Pancreas (tissue), 10 donors: ENCODE measurements at regions of chr7 and their contacts with region 1.

Region 1: GRCh38 chr7:7595451-7595850 is 28.8 kb downstream of the MIOS start:
- DNase-seq: no peak
- ATAC-seq: peak in 3 of 4 donors; percentile 62 to 70 (median 63)
- H3K4me3 ChIP-seq: no peak overlapping the region
- H3K27ac ChIP-seq: no peak overlapping the region
- H3K4me1 ChIP-seq: no peaks in the 10 kb centered on the region
- H3K27me3 ChIP-seq: no peaks in the 10 kb centered on the region
- CTCF ChIP-seq: peak in 2 of 4 donors; percentile 9 to 12

Region 2: GRCh38 chr7:7428806-7429205 is 166.6 kb before region 1 on chr7:
- intact Hi-C with region 1: no loop called
- DNase-seq: no peak
- ATAC-seq: no peak
- H3K4me3 ChIP-seq: no peak overlapping the region
- H3K27ac ChIP-seq: no peak overlapping the region
- H3K4me1 ChIP-seq: no peaks in the 10 kb centered on the region
- H3K27me3 ChIP-seq: no peaks in the 10 kb centered on the region
- CTCF ChIP-seq: no peak

Region 3: DNA sequence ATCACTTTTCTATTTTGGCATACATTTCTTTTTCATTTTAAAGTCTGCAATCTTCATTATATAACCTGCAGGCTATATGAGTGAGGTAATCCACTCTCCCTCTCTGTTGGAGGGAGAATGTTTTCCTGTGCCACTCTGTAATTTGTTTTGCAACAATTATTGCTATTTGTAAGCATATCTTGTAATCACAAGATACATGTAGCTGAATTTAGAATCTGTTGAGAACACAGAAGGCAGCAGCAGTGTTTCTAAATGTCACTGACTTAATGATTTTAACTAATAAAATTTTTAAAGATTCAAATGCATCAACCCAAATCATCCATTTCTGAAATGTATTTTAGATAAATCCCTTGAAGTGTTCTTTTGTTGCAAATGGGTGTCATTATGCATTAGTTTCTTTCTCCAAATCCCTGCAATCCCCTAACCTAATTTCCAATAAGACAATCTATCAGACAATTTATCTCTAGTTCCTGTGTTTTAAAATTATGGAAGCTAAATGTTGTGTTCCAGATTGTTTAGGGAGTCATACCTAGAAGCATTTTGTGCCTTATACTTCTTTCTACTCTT is 25.3 kb after region 1 on chr7:
- intact Hi-C with region 1: no loop called
- DNase-seq: no peak
- ATAC-seq: no peak
- H3K4me3 ChIP-seq: no peak overlapping the region
- H3K27ac ChIP-seq: no peak overlapping the region
- H3K4me1 ChIP-seq: no peaks in the 10 kb centered on the region
- H3K27me3 ChIP-seq: no peaks in the 10 kb centered on the region
- CTCF ChIP-seq: no peak

Region 4: DNA sequence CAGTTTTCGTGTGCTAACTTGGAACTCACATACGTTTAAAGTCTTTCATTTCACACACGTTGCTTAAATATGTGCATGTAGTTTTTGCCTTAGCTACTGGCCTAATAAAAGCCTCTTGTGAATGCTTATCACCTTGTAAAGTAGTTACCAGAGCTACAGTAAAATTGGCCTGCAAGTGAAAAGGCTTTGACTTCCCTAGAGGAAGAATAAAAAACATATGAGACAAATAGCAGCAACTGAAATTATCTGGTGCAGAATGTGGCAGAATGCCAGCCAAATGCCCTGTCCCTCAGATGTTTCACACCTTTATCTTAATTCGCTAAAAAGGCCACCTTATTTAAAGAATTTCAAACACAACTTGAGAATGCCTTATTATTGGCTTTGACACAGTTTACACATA is 151.0 kb after region 1 on chr7:
- intact Hi-C with region 1: no loop called
- DNase-seq: no peak
- ATAC-seq: no peak
- H3K4me3 ChIP-seq: no peak overlapping the region
- H3K27ac ChIP-seq: no peak overlapping the region
- H3K4me1 ChIP-seq: peaks cover 7% of the 10 kb centered on the region in 3 donors
- H3K27me3 ChIP-seq: no peaks in the 10 kb centered on the region
- CTCF ChIP-seq: no peak

Region 5: DNA sequence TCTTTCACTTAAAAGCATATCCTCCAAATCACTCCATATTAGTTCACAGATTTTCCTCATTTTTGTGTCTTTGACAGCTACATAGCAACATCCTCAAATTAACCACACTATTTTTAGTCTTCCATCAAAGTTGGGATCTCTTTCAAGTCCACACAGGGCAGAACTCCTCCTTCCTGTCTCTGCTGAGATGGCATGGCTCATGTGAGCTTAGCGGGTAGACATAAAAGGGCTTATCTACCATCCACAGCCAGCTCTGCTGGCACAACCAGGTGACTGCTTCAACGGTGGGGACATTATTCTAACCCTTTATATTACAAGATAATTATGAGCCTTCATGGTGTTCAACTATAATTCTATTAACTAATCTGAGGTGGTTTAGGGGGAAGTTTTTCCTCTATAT is 631.0 kb after region 1 on chr7:
- intact Hi-C with region 1: loop called in 1 of 3 experiments (anchors 10 kb)
- DNase-seq: no peak
- ATAC-seq: no peak
- H3K4me3 ChIP-seq: no peak overlapping the region
- H3K27ac ChIP-seq: no peak overlapping the region
- H3K4me1 ChIP-seq: no peaks in the 10 kb centered on the region
- H3K27me3 ChIP-seq: no peaks in the 10 kb centered on the region
- CTCF ChIP-seq: no peak